Mammary epithelial cell (primary cell): ENCODE measurements at regions of chr5 and their contacts with region 1.

Region 1: GRCh38 chr5:168268949-168269943 is 22.2 kb upstream of the WWC1 start:
- DNase-seq: peak; percentile 88
- H3K4me3 ChIP-seq: peak overlapping the region; percentile 10 to 54 (median 42)
- H3K27ac ChIP-seq: no peak overlapping the region
- H3K4me1 ChIP-seq: peaks cover 14% of the 10 kb centered on the region
- H3K27me3 ChIP-seq: no peaks in the 10 kb centered on the region
- CTCF ChIP-seq: peak; percentile 73 to 90

Region 2: DNA sequence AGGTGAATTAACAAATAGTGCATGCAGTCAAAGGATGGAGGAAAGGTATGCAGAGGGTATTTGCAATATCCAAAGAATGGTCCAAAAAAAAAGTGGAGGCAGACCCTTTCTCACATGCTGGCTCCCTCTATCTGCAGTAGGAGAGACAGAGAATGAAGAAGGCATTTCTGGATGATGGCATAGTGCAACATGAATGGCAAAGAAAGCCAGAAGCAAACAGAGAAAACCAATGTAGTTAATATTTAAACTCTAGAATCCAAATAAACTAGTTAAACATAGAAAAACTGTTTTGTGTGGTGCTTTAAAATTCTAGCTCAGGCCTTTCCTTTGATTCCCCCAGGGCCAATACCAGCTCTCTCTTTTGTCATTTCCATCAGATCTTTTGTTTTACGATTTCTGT is 380.9 kb before region 1 on chr5:
- CTCF ChIA-PET with region 1: no interaction called
- dilution Hi-C with region 1: no loop called
- in situ Hi-C with region 1: no loop called
- intact Hi-C with region 1: no loop called
- DNase-seq: no peak
- H3K4me3 ChIP-seq: no peak overlapping the region
- H3K27ac ChIP-seq: no peak overlapping the region
- H3K4me1 ChIP-seq: no peaks in the 10 kb centered on the region
- H3K27me3 ChIP-seq: no peaks in the 10 kb centered on the region
- CTCF ChIP-seq: no peak

Region 3: DNA sequence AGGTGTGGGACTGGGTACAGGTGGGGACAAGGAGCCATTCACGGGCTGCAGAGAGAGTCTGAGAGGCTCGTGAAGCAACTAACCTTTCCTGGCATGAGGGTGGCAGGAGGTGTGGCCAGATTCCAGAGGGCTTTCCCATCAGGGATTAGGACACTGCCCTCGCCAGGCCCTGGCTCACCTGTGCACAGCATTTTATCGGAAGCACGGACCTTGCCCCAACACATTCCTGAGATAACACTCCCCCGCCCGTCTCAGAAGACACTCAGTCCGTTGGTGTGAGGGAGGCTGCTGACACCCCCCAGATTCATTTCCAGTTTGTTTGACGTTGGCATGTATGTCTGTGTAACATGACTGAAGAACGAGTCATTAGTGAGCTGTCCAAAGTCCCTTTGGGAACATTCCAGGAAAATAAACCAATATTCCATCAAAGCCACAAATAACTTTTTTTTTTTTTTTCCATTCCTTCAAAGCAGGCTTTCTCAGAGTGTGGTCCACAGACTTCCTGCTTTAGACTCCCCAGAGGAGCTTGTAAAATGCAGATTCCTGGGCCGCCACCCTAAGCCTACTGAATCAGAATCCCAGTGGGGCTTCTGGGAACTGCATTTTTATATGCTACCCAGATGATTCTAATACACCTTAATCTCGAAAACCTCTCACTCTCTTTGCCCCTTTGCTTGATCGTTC is 45.6 kb after region 1 on chr5:
- CTCF ChIA-PET with region 1: interaction called, 12 read pairs
- dilution Hi-C with region 1: no loop called
- in situ Hi-C with region 1: no loop called
- intact Hi-C with region 1: loop called (anchors 1 kb)
- DNase-seq: peak; percentile 93
- H3K4me3 ChIP-seq: peak overlapping the region in 1 of 3 experiments; percentile 1
- H3K27ac ChIP-seq: peak overlapping the region; percentile 61
- H3K4me1 ChIP-seq: peaks cover 36% of the 10 kb centered on the region
- H3K27me3 ChIP-seq: no peaks in the 10 kb centered on the region
- CTCF ChIP-seq: peak; percentile 11 to 37

Region 4: GRCh38 chr5:168346441-168346840 is 77.2 kb after region 1 on chr5:
- CTCF ChIA-PET with region 1: no interaction called
- dilution Hi-C with region 1: loop called (anchors 5 kb)
- in situ Hi-C with region 1: no loop called
- intact Hi-C with region 1: no loop called
- DNase-seq: peak; percentile 81
- H3K4me3 ChIP-seq: no peak overlapping the region
- H3K27ac ChIP-seq: no peak overlapping the region
- H3K4me1 ChIP-seq: peaks cover 31% of the 10 kb centered on the region
- H3K27me3 ChIP-seq: no peaks in the 10 kb centered on the region
- CTCF ChIP-seq: no peak

Region 5: GRCh38 chr5:168409580-168410458 is 140.6 kb after region 1 on chr5:
- CTCF ChIA-PET with region 1: no interaction called
- dilution Hi-C with region 1: loop called (anchors 5 kb)
- in situ Hi-C with region 1: loop called (anchors 10 kb)
- intact Hi-C with region 1: no loop called
- DNase-seq: peak; percentile 79
- H3K4me3 ChIP-seq: peak overlapping the region in 1 of 3 experiments; percentile 11
- H3K27ac ChIP-seq: peak overlapping the region; percentile 70
- H3K4me1 ChIP-seq: peaks cover 54% of the 10 kb centered on the region
- H3K27me3 ChIP-seq: no peaks in the 10 kb centered on the region
- CTCF ChIP-seq: no peak

Region 6: DNA sequence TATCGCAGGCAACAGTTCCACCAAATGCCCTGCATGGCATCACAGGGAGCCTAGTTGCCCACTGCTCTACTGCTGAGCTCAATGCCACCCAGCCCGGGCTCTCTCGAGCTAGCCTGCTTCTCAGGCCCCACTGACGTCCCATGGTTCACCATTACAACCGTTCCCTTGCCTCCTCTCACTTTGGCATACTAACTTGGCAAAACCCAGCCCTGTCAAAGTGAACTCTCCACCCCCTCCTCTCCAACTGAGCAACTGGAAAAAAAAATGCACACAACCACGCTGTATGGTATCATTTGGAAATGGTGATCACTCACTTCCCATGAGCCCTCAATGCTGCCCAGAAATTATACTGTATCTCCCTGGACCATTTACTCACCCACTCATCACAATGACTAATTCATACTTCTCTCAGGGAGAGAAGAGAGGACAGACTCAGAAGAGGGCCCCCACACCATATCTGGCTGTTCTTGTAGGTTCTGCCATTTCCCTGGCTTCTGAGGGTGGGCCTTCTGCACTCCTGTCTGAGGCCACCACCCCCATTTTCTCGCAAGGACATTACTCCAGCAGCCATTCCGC is 165.6 kb after region 1 on chr5:
- CTCF ChIA-PET with region 1: no interaction called
- dilution Hi-C with region 1: no loop called
- in situ Hi-C with region 1: no loop called
- intact Hi-C with region 1: loop called (anchors 5 kb)
- DNase-seq: no peak
- H3K4me3 ChIP-seq: no peak overlapping the region
- H3K27ac ChIP-seq: no peak overlapping the region
- H3K4me1 ChIP-seq: no peaks in the 10 kb centered on the region
- H3K27me3 ChIP-seq: no peaks in the 10 kb centered on the region
- CTCF ChIP-seq: no peak

Region 7: DNA sequence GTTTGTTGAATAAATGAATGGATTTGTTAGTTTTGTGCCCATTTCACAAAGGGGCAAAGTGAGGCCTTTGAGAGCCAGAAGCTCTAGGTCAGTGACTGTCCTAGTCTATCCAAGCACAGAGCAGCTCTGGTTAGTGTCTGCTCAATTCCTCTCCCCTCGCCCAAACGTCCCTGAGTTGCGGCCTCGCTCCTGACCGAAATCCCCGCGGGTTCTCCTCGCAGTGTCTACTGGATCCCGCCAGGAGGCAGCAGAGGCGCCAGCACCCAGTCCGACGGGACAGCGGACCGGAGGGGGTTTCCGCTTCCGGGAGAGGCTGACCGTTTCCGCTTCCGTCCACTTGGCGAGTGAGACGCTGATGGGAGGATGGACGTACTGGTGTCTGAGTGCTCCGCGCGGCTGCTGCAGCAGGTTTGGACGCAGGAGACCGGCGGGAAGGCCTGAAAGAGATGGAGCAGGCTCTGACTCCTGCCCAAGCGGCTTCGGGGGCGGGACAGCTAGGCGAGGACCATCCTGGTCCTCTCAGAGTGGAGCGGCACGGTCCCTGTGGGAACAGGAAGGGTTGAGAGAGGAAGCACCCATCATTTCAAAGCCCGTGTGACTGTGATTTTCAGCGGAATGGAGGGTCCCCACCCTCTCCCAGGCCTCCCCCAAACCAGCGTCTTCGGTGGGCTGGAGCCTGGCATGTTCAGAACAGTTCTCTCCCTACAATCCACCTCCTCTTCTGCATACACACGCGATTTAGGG is 217.1 kb after region 1 on chr5 and contains the start of gene RARS1:
- CTCF ChIA-PET with region 1: no interaction called
- dilution Hi-C with region 1: no loop called
- in situ Hi-C with region 1: no loop called
- intact Hi-C with region 1: loop called (anchors 1 kb)
- DNase-seq: peak; percentile 88
- H3K4me3 ChIP-seq: peak within 1 kb of the TSS; percentile 77 to 95 (median 88)
- H3K27ac ChIP-seq: peak within 1 kb of the TSS; percentile 70
- H3K4me1 ChIP-seq: peaks cover 7% of the 10 kb centered on the region
- H3K27me3 ChIP-seq: no peaks in the 10 kb centered on the region
- CTCF ChIP-seq: peak; percentile 92 to 99
- total RNA-seq, gene RARS1: 107 to 132 TPM

Region 8: GRCh38 chr5:169583424-169584204 is 1314.4 kb after region 1 on chr5 and contains the start of gene SPDL1:
- CTCF ChIA-PET with region 1: no interaction called
- dilution Hi-C with region 1: no loop called
- in situ Hi-C with region 1: no loop called
- intact Hi-C with region 1: loop called (anchors 1 kb)
- DNase-seq: peak; percentile 93
- H3K4me3 ChIP-seq: peak within 1 kb of the TSS; percentile 85 to 98 (median 92)
- H3K27ac ChIP-seq: peak within 1 kb of the TSS; percentile 84
- H3K4me1 ChIP-seq: peaks cover 16% of the 10 kb centered on the region
- H3K27me3 ChIP-seq: no peaks in the 10 kb centered on the region
- CTCF ChIP-seq: no peak
- total RNA-seq, gene SPDL1: 7.7 to 31.1 TPM